MCF 10A (cell line): ENCODE measurements at regions of chr11 and their contacts with region 1.

Region 1: GRCh38 chr11:119728651-119729580 is at the start of gene NECTIN1:
- DNase-seq: peak; percentile 83
- H3K4me3 Mint-ChIP-seq: peak within 1 kb of the TSS; percentile 81
- H3K27ac Mint-ChIP-seq: peak within 1 kb of the TSS; percentile 69
- H3K4me1 Mint-ChIP-seq: peaks cover 16% of the 10 kb centered on the region
- H3K27me3 Mint-ChIP-seq: no peaks in the 10 kb centered on the region
- CTCF ChIP-seq: peak; percentile 96
- total RNA-seq, gene NECTIN1: 59.2 and 78.6 TPM in 2 replicates

Region 2: DNA sequence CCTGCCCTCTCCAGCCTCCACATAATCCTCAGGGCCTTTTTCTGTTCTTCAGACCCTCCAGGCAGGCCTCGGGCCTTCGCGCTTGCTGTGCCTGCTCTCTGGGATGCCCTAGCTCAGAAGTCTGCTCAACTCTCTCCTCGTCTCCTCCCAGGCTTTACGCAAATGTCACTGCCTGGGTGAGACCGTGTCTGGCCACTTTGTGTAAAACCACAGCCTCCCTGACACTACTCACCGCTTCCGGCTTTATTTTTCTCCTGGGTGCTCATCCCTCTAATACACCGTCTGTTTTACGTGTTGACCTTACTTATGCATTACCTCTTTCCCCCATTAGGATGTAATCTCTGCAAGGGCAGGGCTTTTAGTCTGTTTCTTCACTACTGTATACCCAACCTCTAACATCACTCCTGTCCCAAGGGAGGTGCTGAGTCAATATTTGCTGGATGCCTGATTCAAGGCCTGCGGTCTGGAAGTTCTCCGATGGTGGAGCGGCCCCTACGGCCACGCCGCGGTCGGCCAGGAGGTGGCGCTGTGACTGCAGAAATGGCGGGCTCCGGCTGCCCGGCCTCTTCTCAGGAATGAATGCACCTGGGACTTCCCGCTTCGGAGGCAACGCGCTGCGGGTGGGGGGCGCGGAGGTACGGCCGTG is 247.8 kb before region 1 on chr11:
- CTCF ChIA-PET with region 1: interaction called, 9 read pairs
- POLR2A ChIA-PET with region 1: interaction called, 6 read pairs
- intact Hi-C with region 1: loop called (anchors 2 kb)
- DNase-seq: peak; percentile 80
- H3K4me3 Mint-ChIP-seq: no peak overlapping the region
- H3K27ac Mint-ChIP-seq: peak overlapping the region; percentile 27
- H3K4me1 Mint-ChIP-seq: peaks cover 7% of the 10 kb centered on the region
- H3K27me3 Mint-ChIP-seq: peaks cover 14% of the 10 kb centered on the region
- CTCF ChIP-seq: peak; percentile 98

Region 3: DNA sequence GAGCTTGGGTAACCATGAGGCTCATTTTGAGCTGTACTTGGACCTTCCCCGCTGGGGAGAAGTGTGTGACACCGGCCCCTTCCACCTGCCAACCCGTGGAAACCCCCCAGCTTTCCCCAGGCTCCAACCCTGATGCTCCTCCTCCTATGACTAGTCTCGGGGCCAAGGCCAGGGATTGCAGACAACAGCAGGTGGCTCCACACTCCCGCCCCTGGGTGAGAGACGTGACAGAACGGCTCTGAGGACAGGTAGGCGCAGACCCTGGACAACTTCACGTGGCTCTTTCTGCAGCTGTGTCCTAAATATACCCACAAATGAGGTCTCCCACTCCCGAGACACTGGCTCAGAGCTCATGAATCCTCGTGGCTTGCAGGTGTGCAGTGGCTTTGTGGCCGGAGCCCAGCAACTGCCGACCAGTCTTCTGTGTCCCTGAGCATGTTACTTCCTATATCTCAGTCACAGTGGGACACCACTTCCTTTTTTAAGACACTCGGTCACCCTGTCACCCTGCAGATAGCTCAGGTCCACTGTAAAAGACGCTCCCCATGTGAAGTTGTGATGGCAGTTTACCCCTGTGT is 55.1 kb before region 1 on chr11:
- CTCF ChIA-PET with region 1: interaction called, 26 read pairs
- POLR2A ChIA-PET with region 1: interaction called, 4 read pairs
- intact Hi-C with region 1: no loop called
- DNase-seq: no peak
- H3K4me3 Mint-ChIP-seq: no peak overlapping the region
- H3K27ac Mint-ChIP-seq: no peak overlapping the region
- H3K4me1 Mint-ChIP-seq: no peaks in the 10 kb centered on the region
- H3K27me3 Mint-ChIP-seq: no peaks in the 10 kb centered on the region
- CTCF ChIP-seq: no peak

Region 4: DNA sequence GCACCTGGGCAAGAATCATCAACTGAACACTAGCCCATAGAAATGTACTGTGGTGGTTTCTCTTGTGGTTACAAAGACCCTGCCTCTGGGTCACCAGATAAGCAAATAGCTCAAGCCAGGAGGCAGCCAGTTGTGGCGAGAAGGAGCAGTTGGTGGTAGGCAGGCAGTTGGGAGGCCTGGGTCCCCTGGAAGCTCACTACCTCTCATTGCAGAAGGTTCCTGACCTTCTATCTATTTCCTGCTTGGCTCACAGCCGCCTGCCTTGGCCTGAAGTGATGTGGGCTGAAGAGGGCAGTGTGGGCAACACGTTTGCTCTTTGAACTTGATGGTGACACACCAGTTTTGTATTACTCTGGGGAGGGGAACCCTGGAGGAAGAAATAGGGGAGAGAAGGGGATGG is 34.6 kb before region 1 on chr11:
- CTCF ChIA-PET with region 1: interaction called, 56 read pairs
- POLR2A ChIA-PET with region 1: interaction called, 61 read pairs
- intact Hi-C with region 1: loop called (anchors 1 kb)
- DNase-seq: peak; percentile 61
- H3K4me3 Mint-ChIP-seq: no peak overlapping the region
- H3K27ac Mint-ChIP-seq: peak overlapping the region; percentile 93
- H3K4me1 Mint-ChIP-seq: peaks cover 80% of the 10 kb centered on the region
- H3K27me3 Mint-ChIP-seq: no peaks in the 10 kb centered on the region
- CTCF ChIP-seq: peak; percentile 10

Region 5: DNA sequence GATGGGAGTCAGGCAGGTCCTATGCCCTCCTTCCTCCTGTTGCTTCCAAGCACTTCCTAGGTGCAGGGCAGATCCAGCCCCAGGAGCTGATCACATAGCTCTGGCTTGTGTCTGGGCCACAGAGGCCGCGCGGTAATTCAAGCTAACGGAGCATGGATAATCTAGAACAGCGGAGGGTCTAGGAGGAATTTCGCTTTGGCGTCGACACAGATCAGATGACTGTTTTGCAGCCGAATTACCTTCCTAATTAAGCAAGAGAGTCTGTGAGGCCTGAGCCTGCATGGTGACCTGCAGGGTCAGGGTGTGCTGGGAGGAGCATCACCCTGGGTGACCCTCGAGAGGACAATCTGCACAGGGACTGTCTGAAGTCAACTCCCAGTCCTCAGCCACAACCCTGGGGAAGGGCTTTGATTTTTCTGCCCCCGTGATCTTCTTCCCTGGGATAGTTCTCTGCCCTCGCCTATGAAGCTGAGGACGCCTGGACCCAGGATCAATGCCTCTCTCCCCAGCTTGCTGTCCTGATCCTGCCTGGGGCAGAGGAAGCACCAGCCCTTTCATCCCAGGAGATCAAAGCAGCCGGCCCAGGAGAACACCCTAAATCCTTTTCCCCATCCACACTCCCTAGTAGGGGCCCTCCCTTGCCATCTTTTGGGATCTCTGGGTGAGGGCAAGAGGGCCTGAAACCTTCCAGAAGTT is 10.9 kb before region 1 on chr11:
- CTCF ChIA-PET with region 1: interaction called, 10 read pairs
- POLR2A ChIA-PET with region 1: no interaction called
- intact Hi-C with region 1: no loop called
- DNase-seq: no peak
- H3K4me3 Mint-ChIP-seq: no peak overlapping the region
- H3K27ac Mint-ChIP-seq: no peak overlapping the region
- H3K4me1 Mint-ChIP-seq: peaks cover 40% of the 10 kb centered on the region
- H3K27me3 Mint-ChIP-seq: no peaks in the 10 kb centered on the region
- CTCF ChIP-seq: no peak